ENCODE measurements at regions of chr11 and their contacts with region 1.

Region 1: DNA sequence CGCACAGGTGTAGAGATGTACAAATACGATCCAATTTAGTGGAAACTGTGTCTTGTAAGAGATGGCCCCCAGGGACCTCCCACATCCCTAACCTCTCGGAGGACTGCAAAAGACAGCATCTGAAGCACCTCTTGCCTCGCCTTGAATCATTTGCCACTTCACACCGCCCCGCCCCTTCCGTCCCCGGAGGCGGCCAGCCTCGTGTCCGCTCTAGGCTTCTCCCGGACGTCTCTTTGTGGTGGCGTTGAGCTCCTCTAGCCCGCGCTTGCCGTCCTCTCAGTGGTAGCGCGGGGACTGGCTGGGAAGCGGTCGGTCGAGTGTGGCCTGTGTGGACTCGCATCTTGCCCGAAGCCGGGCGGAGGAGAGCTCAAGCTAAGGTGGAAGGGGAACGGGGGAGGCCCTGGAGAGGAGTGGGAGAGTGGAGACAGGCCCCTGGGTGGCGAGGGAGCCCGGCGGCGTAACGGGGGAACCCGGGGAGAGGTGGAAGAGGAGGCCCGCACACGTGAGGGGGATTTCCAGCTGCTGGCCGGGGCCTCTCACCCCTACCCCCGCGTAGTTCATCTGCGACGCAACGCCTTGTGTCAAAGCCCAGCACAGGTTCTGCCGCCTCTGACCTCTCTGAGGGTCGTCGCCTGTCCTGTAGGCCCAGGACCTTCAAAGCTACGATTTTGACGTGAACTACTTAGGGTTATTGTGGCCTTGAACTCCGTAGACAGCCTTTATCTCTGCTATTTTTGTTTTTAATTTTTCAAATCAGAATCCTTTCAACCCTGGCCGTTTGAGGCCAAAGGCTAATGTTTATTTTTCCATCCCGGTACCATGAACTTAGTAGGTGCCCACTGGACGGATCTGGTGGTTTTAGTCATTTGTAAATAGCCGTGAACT is at the start of gene ARL14EP:
- DNase-seq: peak; percentile 96
- H3K4me3 Mint-ChIP-seq: peak within 1 kb of the TSS; percentile 100
- H3K27ac Mint-ChIP-seq: peak within 1 kb of the TSS; percentile 100
- H3K4me1 Mint-ChIP-seq: peaks cover 34% of the 10 kb centered on the region
- H3K27me3 Mint-ChIP-seq: peaks cover 16% of the 10 kb centered on the region
- total RNA-seq, gene ARL14EP: 36.5 and 36.8 TPM in 2 replicates

Region 2: GRCh38 chr11:30333405-30333804 is 10.3 kb after region 1 on chr11:
- intact Hi-C with region 1: loop called (anchors 2 kb)
- DNase-seq: peak; percentile 48
- H3K4me3 Mint-ChIP-seq: no peak overlapping the region
- H3K27ac Mint-ChIP-seq: no peak overlapping the region
- H3K4me1 Mint-ChIP-seq: peaks cover 24% of the 10 kb centered on the region
- H3K27me3 Mint-ChIP-seq: no peaks in the 10 kb centered on the region

Region 3: DNA sequence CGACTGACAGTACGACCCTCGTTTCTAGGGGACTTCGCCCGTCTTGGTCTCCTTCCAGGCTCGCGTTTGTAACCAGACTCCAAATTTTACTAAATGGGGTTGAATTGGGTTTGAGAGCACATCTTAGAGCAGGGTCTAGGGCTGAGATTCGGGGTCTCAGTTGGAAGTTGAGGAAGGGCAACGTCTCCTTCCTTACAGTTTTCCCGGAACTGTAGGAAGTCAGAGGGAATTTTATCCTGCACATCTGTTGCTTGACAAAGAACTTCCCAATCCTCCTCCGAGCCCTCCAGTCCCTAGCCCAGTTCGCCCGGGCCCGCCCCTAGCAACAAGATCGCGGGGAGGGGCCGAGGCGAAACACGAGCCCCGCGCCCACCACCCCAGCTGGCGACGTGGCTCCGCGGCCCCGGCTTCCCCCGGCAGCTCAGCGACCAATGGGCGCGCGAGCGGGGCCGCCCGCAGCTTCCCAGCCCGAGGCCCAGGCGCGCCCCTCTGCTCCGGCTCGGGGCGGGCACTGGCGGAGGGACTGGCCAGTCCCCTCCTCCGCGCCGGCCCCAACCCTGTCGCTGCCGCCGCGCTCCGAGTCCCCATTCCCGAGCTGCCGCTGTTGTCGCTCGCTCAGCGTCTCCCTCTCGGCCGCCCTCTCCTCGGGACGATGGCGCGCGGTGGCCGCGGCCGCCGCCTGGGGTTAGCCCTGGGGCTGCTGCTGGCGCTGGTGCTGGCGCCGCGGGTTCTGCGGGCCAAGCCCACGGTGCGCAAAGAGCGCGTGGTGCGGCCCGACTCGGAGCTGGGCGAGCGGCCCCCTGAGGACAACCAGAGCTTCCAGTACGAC is 1767.7 kb after region 1 on chr11 and contains the start of gene RCN1:
- intact Hi-C with region 1: loop called (anchors 5 kb)
- DNase-seq: peak; percentile 84
- H3K4me3 Mint-ChIP-seq: peak within 1 kb of the TSS; percentile 85
- H3K27ac Mint-ChIP-seq: peak within 1 kb of the TSS; percentile 92
- H3K4me1 Mint-ChIP-seq: peaks cover 35% of the 10 kb centered on the region
- H3K27me3 Mint-ChIP-seq: peaks cover 13% of the 10 kb centered on the region
- total RNA-seq, gene RCN1: 30.5 and 30.6 TPM in 2 replicates

Measured in activated CD4-positive, alpha-beta T cell treated with anti-CD3 and anti-CD28 coated beads, Interleukin-2, amount 10 ng/mL, durations not matched to agents 24 days and 14 days (primary cell).